ENCODE measurements at regions of chr4 and their contacts with region 1.

Region 1: DNA sequence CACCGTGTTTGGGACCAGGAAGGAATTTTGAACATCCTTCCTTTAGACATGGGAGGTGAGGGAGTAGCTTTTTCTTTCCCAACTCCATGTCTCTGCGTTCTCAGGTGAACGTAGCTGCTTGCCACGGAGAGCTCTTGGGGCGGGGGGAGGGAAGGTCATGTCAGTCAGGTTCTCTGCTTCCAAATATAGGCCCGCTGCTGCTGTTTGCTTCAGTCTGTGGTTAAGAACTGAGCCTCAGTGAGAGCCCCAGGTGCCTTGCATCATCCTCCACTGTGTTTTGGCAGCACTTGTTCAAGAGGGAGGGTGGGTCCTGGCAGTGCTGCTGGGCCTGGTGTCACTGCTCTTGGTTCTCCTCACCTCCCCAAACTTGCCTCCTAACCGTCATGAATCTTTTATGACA is 46.5 kb downstream of the HADH start:
- DNase-seq: peak; percentile 44 to 93 (median 78)
- ATAC-seq: peak; percentile 95 to 99
- H3K4me3 Mint-ChIP-seq: peak overlapping the region; percentile 66 to 85 (median 76)
- H3K27ac Mint-ChIP-seq: peak overlapping the region; percentile 90 to 100 (median 98)
- H3K4me1 Mint-ChIP-seq: peaks cover 19 to 74% (median 58%) of the 10 kb centered on the region in 4 donors
- H3K27me3 Mint-ChIP-seq: no peaks in the 10 kb centered on the region

Region 2: DNA sequence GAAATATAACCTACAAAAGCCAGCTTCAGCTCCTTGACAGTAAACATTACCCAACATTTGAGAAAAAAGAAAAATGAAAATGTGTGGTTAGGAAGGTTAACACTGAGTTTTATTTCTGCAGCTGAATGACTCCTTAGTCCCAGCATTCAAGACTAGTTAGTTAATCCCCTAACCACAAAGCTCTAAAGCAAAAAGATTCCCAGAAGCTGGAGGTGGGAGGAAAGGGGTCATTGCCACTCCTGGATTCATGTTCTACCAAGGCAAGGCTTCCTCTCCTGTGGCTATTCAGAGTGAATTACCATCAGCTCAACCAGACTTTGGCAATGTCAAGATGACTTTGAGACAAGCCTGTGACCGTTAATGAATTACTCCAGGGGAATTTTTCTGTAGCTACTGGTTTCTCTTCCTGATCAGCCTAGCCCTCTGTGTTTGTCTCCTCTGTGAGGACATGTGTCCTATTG is 17.1 kb after region 1 on chr4:
- POLR2A ChIA-PET with region 1: interaction called, 16 read pairs
- DNase-seq: no peak
- ATAC-seq: no peak
- H3K4me3 Mint-ChIP-seq: peak overlapping the region; percentile 5 to 89 (median 58)
- H3K27ac Mint-ChIP-seq: peak overlapping the region; percentile 93 to 99 (median 98)
- H3K4me1 Mint-ChIP-seq: peaks cover 57 to 97% (median 92%) of the 10 kb centered on the region in 4 donors
- H3K27me3 Mint-ChIP-seq: no peaks in the 10 kb centered on the region

Measured in naive thymus-derived CD8-positive, alpha-beta T cell (primary cell).